Activated CD4-positive, alpha-beta memory T cell treated with anti-CD3 and anti-CD28 coated beads, Interleukin-2, amount 10 ng/mL, durations not matched to agents 7 days and 5 days (primary cell): ENCODE measurements at regions of chr14 and their contacts with region 1.

Region 1: GRCh38 chr14:23478111-23478759 is 8.7 kb downstream of the NGDN start:
- DNase-seq: peak; percentile 71
- H3K4me3 Mint-ChIP-seq: no peak overlapping the region
- H3K27ac Mint-ChIP-seq: no peak overlapping the region
- H3K4me1 Mint-ChIP-seq: peaks cover 2% of the 10 kb centered on the region
- H3K27me3 Mint-ChIP-seq: no peaks in the 10 kb centered on the region

Region 2: GRCh38 chr14:23555882-23556699 is 77.9 kb after region 1 on chr14 and contains the start of gene THTPA:
- CTCF ChIA-PET with region 1: interaction called, 148 read pairs
- POLR2A ChIA-PET with region 1: interaction called, 14 read pairs
- DNase-seq: peak; percentile 95
- H3K4me3 Mint-ChIP-seq: peak within 1 kb of the TSS; percentile 97
- H3K27ac Mint-ChIP-seq: peak within 1 kb of the TSS; percentile 90
- H3K4me1 Mint-ChIP-seq: peaks cover 43% of the 10 kb centered on the region
- H3K27me3 Mint-ChIP-seq: no peaks in the 10 kb centered on the region
- total RNA-seq, gene THTPA: 11.6 to 11.8 TPM